ENCODE measurements at regions of chr16 and their contacts with region 1.

Region 1: DNA sequence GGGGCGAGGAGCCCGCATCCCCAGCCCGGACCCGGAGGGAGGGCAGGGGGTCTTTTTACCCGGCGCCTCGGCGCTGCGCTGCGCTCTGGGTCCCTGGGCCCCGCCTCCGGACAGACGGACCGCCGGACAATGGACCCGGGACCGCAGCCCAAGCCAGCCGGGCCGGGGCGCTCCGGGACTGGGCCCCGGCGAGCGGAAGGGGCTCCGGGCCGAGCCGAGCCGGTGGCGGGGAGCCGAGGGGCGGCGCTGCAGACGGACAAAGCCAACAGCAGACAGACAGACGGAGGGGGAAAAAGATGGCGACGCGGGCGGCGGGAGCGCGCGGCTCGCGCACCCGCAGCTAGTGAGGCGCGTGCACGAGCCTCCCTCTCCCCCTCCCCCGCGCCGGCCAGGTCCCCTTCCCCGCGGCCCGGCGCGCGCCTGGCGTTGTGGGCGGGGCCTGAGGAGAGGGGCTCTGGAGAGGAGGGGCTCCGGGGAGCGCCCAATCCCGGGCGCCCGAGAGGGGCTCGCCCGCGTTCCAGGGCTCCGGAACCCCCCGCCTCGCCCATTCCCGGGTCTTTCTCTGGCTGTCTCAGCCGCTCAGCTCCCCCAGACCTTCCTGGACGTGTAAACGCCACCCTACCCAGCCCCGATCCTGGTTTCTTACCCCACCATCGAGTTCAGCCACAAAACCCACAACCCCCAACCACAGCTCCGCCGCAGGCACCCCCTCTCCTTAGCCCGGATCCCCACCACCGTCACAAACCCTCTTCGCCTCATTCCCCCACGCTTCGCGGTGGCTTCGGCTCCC is at the start of gene ZNF821:
- DNase-seq: peak; percentile 72 to 90 (median 79)
- H3K4me3 ChIP-seq: peak within 1 kb of the TSS; percentile 67 to 72
- H3K4me3 Mint-ChIP-seq: peak within 1 kb of the TSS; percentile 93 to 99 (median 95)
- H3K27ac ChIP-seq: peak within 1 kb of the TSS; percentile 78
- H3K27ac Mint-ChIP-seq: peak within 1 kb of the TSS; percentile 96 to 100 (median 97)
- H3K4me1 ChIP-seq: peaks cover 48% of the 10 kb centered on the region
- H3K4me1 Mint-ChIP-seq: peaks cover 41 to 57% (median 47%) of the 10 kb centered on the region in 4 donors
- H3K27me3 ChIP-seq: no peaks in the 10 kb centered on the region
- H3K27me3 Mint-ChIP-seq: peaks cover 0 to 3% of the 10 kb centered on the region in 2 donors
- total RNA-seq, gene ZNF821: 8.0 to 9.7 TPM

Region 2: DNA sequence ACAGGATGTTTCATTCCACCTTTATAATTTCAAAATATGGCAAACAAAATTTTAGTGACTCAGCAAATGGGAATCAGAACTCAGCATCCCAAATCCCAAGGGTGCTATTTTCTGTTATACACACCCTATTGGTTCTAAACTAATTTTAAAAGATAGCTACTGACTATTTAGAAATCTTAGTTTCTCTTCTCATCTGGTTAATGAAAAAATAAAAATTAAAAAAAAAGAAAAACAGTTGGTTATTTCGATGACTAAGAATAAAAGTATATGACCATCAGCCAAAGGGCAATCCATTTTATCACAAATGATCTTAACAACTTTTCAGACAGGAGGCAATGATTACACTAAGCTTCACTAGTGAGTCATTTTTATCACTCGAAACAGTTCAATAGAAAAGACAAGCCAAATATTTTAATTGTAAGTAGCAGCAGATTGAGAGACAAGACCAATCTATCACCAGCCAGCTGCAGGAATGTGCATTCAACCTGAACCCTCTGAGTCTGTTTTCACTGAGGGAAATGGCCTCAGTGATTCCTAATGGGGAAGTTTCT is 174.7 kb before region 1 on chr16:
- CTCF ChIA-PET with region 1: no interaction called
- POLR2A ChIA-PET with region 1: no interaction called
- intact Hi-C with region 1: no loop called
- DNase-seq: no peak
- H3K4me3 ChIP-seq: no peak overlapping the region
- H3K4me3 Mint-ChIP-seq: no peak overlapping the region
- H3K27ac ChIP-seq: no peak overlapping the region
- H3K27ac Mint-ChIP-seq: no peak overlapping the region
- H3K4me1 ChIP-seq: no peaks in the 10 kb centered on the region
- H3K4me1 Mint-ChIP-seq: peaks cover 0 to 4% (median under 1%) of the 10 kb centered on the region in 4 donors
- H3K27me3 ChIP-seq: no peaks in the 10 kb centered on the region
- H3K27me3 Mint-ChIP-seq: no peaks in the 10 kb centered on the region

Region 3: GRCh38 chr16:71723537-71724319 is 160.3 kb before region 1 on chr16:
- CTCF ChIA-PET with region 1: interaction called, 5 read pairs
- POLR2A ChIA-PET with region 1: interaction called, 9 read pairs
- intact Hi-C with region 1: loop called (anchors 5 kb)
- DNase-seq: peak; percentile 87 to 91 (median 88)
- H3K4me3 ChIP-seq: peak overlapping the region; percentile 45 to 54
- H3K4me3 Mint-ChIP-seq: peak overlapping the region; percentile 81 to 90 (median 88)
- H3K27ac ChIP-seq: peak overlapping the region; percentile 83
- H3K27ac Mint-ChIP-seq: peak overlapping the region; percentile 76 to 96 (median 89)
- H3K4me1 ChIP-seq: peaks cover 14% of the 10 kb centered on the region
- H3K4me1 Mint-ChIP-seq: peaks cover 7 to 20% (median 12%) of the 10 kb centered on the region in 4 donors
- H3K27me3 ChIP-seq: no peaks in the 10 kb centered on the region
- H3K27me3 Mint-ChIP-seq: peaks cover 0 to 1% of the 10 kb centered on the region in 2 donors

Region 4: GRCh38 chr16:71808593-71809459 is 75.2 kb before region 1 on chr16 and contains the start of gene AP1G1:
- CTCF ChIA-PET with region 1: interaction called, 53 read pairs
- POLR2A ChIA-PET with region 1: interaction called, 157 read pairs
- intact Hi-C with region 1: loop called (anchors 1 kb)
- DNase-seq: peak; percentile 94 to 98 (median 97)
- H3K4me3 ChIP-seq: peak within 1 kb of the TSS; percentile 98 to 99
- H3K4me3 Mint-ChIP-seq: peak within 1 kb of the TSS; percentile 92 to 99 (median 98)
- H3K27ac ChIP-seq: peak within 1 kb of the TSS; percentile 100
- H3K27ac Mint-ChIP-seq: peak within 1 kb of the TSS; percentile 96 to 100 (median 100)
- H3K4me1 ChIP-seq: peaks cover 39% of the 10 kb centered on the region
- H3K4me1 Mint-ChIP-seq: peaks cover 19 to 55% (median 37%) of the 10 kb centered on the region in 4 donors
- H3K27me3 ChIP-seq: no peaks in the 10 kb centered on the region
- H3K27me3 Mint-ChIP-seq: peaks cover 0 to 2% of the 10 kb centered on the region in 2 donors
- total RNA-seq, gene AP1G1: 101 to 103 TPM

Region 5: DNA sequence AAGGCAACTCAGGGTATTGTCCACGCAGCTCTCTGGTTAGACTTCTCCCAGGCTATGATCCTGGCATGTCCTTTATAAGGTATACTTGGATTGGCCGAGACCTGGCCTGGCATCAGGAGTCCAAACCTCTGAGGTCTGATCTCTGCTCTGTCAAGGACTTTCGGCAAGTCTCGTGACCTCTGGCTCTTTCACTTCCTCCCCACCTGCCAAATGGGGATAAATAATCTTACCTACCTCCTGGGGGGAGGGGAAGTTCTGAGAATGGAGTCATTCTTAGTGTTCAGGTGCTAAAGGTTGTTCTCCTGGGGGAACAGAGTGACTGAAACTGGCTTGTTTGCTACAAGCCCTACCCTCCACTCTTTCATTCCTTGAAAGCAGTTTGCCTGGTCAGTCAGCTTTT is 30.6 kb before region 1 on chr16:
- CTCF ChIA-PET with region 1: interaction called, 27 read pairs
- POLR2A ChIA-PET with region 1: interaction called, 10 read pairs
- intact Hi-C with region 1: no loop called
- DNase-seq: no peak
- H3K4me3 ChIP-seq: no peak overlapping the region
- H3K4me3 Mint-ChIP-seq: no peak overlapping the region
- H3K27ac ChIP-seq: no peak overlapping the region
- H3K27ac Mint-ChIP-seq: peak overlapping the region in 6 of 7 donors; percentile 15 to 74 (median 66)
- H3K4me1 ChIP-seq: peaks cover 51% of the 10 kb centered on the region
- H3K4me1 Mint-ChIP-seq: peaks cover 39 to 77% (median 54%) of the 10 kb centered on the region in 4 donors
- H3K27me3 ChIP-seq: no peaks in the 10 kb centered on the region
- H3K27me3 Mint-ChIP-seq: no peaks in the 10 kb centered on the region

Region 6: DNA sequence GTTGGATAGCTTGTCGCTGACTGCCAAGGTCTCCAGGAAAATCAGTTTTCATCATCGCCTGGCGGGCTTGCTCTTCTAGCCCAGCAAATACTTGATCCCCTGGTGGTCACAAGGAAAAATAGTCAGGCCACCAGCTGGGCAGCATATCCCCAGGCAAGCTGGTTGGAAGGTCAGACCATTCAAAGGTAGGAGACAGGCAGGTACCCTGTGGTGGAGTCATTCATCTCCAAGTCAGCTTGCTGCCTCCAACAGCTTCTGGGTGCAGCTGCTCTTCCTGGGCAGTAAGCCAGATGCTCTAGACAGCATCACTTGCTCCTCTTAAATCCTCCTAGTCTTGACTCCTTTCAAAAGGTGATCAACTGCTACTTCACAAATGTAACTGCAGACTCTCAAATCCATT is 16.1 kb before region 1 on chr16:
- CTCF ChIA-PET with region 1: interaction called, 34 read pairs
- POLR2A ChIA-PET with region 1: interaction called, 7 read pairs
- intact Hi-C with region 1: no loop called
- DNase-seq: no peak
- H3K4me3 ChIP-seq: no peak overlapping the region
- H3K4me3 Mint-ChIP-seq: no peak overlapping the region
- H3K27ac ChIP-seq: no peak overlapping the region
- H3K27ac Mint-ChIP-seq: peak overlapping the region in 2 of 7 donors; percentile 55 to 60
- H3K4me1 ChIP-seq: no peaks in the 10 kb centered on the region
- H3K4me1 Mint-ChIP-seq: peaks cover 4 to 21% (median 6%) of the 10 kb centered on the region in 4 donors
- H3K27me3 ChIP-seq: no peaks in the 10 kb centered on the region
- H3K27me3 Mint-ChIP-seq: no peaks in the 10 kb centered on the region

Region 7: DNA sequence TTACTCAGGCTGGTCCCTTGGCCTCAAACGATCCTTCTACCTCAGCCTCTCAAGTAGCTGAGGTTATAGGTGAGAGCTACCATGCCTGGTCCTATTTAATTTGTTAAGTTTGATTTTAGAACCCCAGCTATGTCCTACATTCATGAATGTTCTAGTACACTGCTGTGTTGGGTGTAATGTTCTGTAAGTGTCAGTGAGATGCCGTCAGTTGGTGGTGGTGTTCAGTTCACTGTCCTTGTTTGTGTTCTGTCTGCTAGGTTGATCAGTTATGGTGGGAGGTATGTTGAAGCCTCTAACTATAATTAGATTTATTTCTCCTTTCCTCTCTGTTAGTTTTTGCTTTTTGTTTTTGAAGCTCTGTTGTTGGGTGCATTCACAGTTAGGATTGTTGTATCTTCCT is 19.6 kb after region 1 on chr16:
- CTCF ChIA-PET with region 1: interaction called, 48 read pairs
- POLR2A ChIA-PET with region 1: interaction called, 225 read pairs
- intact Hi-C with region 1: no loop called
- DNase-seq: no peak
- H3K4me3 ChIP-seq: no peak overlapping the region
- H3K4me3 Mint-ChIP-seq: peak overlapping the region in 6 of 8 donors; percentile 19 to 74 (median 40)
- H3K27ac ChIP-seq: no peak overlapping the region
- H3K27ac Mint-ChIP-seq: peak overlapping the region in 4 of 7 donors; percentile 67 to 84 (median 75)
- H3K4me1 ChIP-seq: peaks cover 99% of the 10 kb centered on the region
- H3K4me1 Mint-ChIP-seq: peaks cover 44 to 96% (median 70%) of the 10 kb centered on the region in 4 donors
- H3K27me3 ChIP-seq: no peaks in the 10 kb centered on the region
- H3K27me3 Mint-ChIP-seq: no peaks in the 10 kb centered on the region

Region 8: GRCh38 chr16:72107371-72107770 is 223.3 kb after region 1 on chr16:
- CTCF ChIA-PET with region 1: no interaction called
- POLR2A ChIA-PET with region 1: no interaction called
- intact Hi-C with region 1: no loop called
- DNase-seq: no peak
- H3K4me3 ChIP-seq: no peak overlapping the region
- H3K4me3 Mint-ChIP-seq: no peak overlapping the region
- H3K27ac ChIP-seq: no peak overlapping the region
- H3K27ac Mint-ChIP-seq: peak overlapping the region in 1 of 7 donors; percentile 42
- H3K4me1 ChIP-seq: no peaks in the 10 kb centered on the region
- H3K4me1 Mint-ChIP-seq: no peaks in the 10 kb centered on the region
- H3K27me3 ChIP-seq: no peaks in the 10 kb centered on the region
- H3K27me3 Mint-ChIP-seq: no peaks in the 10 kb centered on the region